ENCODE measurements at regions of chr2 and their contacts with region 1.

Region 1: DNA sequence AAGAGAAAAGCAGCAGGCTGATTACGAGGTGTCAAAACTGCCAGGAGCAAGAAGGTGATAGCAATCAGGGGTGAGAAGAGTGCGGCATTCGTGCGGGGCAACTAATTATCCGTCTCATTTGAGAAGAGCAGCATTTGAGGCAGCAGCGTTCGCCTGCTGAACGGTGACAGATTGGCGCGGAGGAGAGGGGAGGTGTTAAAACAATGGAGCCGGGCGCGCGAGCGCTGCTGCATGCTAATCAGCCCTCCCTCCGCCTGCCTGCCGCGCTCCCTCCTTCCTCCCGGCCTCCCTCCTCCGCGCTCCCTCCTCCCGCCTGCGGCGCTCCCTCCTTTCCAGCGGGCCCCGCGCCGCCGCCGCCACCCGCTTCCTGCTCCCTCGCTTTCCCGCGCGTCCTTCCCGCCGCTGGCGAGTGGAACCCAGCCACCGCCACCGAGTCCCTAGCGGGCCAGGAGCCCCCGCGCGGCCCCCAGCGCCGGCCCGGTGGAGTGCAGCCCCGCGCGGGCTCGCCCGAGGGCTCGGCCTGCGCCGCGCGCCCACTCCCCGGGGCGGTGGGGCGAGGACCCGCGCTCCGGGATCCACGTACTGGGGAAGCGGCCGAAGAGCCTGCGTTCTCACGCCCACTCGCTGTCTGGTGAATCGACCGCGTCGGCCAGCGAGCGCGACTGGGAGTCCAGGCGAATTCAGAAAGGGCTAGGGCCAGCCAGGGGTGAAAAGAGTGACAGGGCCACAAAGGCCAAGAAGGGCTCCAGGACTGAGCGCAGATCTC is 69.5 kb upstream of the PSMD14 start:
- DNase-seq: peak; percentile 87
- H3K4me3 Mint-ChIP-seq: peak overlapping the region; percentile 92
- H3K27ac Mint-ChIP-seq: peak overlapping the region; percentile 82
- H3K4me1 Mint-ChIP-seq: peaks cover 41% of the 10 kb centered on the region
- H3K27me3 Mint-ChIP-seq: peaks cover 2% of the 10 kb centered on the region

Region 2: DNA sequence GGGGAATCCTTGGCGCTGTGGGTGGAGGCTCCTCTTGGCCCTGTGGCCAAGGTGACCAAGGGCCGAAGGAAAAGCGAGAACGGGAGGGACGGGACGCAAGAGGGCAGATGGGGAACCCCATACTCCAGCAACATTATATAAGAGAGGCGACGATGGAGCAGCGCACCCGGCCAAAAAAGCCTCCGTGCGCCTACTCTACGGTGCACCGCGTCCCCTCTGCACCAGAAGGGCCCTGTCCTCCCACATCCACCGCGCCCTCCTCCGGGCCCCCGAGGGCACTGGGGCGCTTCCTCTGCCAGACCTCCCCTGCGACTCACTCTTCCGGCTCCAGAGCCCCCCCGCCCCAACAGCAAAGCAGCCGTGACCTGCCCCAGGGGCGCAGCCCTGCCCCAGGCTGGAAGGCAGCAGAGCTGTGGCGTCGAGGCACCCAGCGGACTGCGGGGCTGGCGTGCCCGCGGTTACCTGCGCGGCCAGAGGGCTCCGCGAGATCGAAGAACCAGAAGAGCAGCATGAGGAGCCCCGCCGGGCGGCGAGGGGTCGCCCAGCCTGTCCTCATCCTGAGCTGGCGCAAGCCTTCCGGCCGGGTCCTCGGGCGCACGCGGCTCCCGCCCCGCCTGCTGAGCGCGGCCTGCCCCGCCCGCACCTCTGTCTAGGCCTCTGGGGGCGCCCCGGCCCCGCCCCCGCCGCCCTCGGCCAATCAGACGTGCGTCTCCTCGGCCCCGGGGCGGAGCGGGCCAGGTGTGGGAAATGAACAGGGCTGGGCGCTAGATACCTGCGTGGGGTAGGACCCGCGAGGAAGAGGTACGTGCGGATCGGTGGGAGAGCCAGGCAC is 1334.4 kb before region 1 on chr2:
- intact Hi-C with region 1: loop called (anchors 10 kb)
- DNase-seq: peak; percentile 93
- H3K4me3 Mint-ChIP-seq: peak within 1 kb of the TSS; percentile 98
- H3K27ac Mint-ChIP-seq: peak within 1 kb of the TSS; percentile 94
- H3K4me1 Mint-ChIP-seq: peaks cover 36% of the 10 kb centered on the region
- H3K27me3 Mint-ChIP-seq: no peaks in the 10 kb centered on the region

Region 3: DNA sequence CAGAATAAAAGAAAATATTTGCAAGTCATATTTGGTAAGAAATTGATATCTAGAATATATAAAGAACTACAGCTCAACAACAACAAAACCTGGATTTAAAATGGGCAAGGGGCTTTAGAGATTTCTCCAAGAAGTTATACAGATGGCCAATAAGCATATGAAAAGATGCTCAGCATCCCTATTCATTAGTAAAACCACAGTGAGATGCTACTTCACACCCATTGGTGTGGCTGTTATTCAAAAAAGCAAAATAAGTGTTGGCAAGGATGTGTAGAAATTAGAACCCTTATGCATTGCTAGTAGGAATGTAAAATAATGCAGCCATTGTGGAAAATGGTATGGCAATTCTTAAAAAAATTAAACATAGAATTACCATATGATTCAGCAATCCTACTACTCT is 48.7 kb before region 1 on chr2:
- intact Hi-C with region 1: no loop called
- DNase-seq: no peak
- H3K4me3 Mint-ChIP-seq: no peak overlapping the region
- H3K27ac Mint-ChIP-seq: no peak overlapping the region
- H3K4me1 Mint-ChIP-seq: peaks cover 44% of the 10 kb centered on the region
- H3K27me3 Mint-ChIP-seq: no peaks in the 10 kb centered on the region

Region 4: GRCh38 chr2:161273038-161273760 is 34.5 kb after region 1 on chr2:
- intact Hi-C with region 1: loop called (anchors 1 kb)
- DNase-seq: peak; percentile 83
- H3K4me3 Mint-ChIP-seq: no peak overlapping the region
- H3K27ac Mint-ChIP-seq: no peak overlapping the region
- H3K4me1 Mint-ChIP-seq: peaks cover 2% of the 10 kb centered on the region
- H3K27me3 Mint-ChIP-seq: peaks cover 17% of the 10 kb centered on the region

Measured in activated CD4-positive, alpha-beta T cell treated with anti-CD3 and anti-CD28 coated beads, Interleukin-2, amount 10 ng/mL, durations not matched to agents 24 days and 14 days (primary cell).